Dorsolateral prefrontal cortex (tissue), 120 donors: ENCODE measurements at regions of chr17 and their contacts with region 1.

Region 1: DNA sequence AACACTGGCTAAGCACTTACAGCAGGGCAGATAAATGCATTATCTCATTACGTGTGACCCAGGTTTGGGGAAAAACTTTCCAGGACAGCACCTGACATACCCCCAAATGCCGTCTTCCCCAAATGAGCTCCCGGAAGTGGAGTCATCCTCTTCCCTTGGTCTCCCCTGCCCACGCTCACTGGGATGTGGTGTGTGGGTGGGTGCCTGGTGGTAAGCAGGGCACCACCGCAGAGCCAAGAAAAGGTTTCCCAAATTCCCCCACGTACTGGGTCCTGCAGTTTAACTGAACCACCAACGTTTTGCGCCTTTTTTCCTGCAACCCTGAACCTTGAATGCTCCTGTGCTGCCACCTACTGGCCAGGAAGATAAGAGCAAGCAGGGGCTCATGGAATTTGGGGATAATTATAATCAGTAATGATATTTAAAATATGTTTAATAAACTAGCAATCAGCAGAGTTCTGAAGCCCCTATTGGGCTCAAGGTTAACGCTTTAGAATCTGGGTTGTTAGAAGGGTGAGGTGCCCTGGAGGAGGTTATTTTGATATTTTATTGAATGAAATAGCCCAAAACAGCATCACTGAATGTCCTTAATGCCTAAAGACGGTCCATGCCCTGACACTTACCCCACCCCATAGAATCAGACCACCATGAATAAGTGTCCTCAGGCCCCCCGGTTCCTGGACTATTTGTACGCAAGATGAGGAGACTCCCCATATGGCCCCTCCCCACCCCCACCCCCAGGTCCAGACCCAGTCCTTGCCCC is 8.0 kb downstream of the SPPL2C start:
- DNase-seq: peak; percentile 57 to 84 (median 67)
- H3K4me3 ChIP-seq: peak overlapping the region in 4 of 59 donors; percentile 2 to 15 (median 10)
- H3K27ac ChIP-seq: peak overlapping the region in 4 of 59 donors; percentile 19 to 55 (median 33)
- H3K27me3 ChIP-seq: no peaks in the 10 kb centered on the region
- CTCF ChIP-seq: peak; percentile 77 to 97 (median 90)

Region 2: DNA sequence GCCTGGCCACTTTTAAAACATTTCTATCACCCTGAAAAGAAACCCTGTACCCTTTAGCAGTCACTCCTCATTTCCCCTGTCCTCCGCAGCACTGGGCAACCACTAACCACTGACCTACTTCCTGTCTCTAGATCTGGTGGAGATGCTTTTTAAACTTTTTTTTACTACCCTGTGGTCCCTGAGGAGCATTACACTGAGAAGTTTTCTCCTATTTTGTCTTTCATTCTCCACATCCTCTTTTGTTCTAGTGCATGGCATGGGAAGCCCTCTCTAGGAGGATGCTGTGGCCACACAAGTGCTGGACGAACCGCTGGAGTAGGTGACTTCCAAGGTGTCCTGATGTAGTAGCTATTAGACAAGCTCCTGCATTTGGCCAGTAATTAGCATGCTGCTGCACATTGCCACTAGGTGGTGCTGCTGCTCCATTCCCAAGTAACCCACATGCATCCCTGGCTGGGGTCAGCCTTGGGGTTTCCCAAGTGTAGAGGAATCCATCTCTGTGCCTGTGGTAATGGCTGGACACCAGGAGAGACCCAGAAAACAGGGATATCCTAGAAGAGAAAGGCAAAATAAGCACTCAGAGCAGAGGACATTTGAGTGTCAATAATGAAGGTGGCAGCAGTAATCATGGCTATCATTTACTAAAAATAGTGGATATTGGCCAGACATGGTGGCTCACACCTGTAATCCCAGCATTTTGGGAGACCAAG is 212.4 kb before region 1 on chr17:
- intact Hi-C with region 1: loop called in 1 of 2 experiments (anchors 5 kb)
- DNase-seq: peak; percentile 73 to 86 (median 80)
- H3K4me3 ChIP-seq: no peak overlapping the region
- H3K27ac ChIP-seq: peak overlapping the region in 3 of 59 donors; percentile 5 to 44 (median 35)
- H3K27me3 ChIP-seq: no peaks in the 10 kb centered on the region
- CTCF ChIP-seq: peak; percentile 85 to 98 (median 95)

Region 3: DNA sequence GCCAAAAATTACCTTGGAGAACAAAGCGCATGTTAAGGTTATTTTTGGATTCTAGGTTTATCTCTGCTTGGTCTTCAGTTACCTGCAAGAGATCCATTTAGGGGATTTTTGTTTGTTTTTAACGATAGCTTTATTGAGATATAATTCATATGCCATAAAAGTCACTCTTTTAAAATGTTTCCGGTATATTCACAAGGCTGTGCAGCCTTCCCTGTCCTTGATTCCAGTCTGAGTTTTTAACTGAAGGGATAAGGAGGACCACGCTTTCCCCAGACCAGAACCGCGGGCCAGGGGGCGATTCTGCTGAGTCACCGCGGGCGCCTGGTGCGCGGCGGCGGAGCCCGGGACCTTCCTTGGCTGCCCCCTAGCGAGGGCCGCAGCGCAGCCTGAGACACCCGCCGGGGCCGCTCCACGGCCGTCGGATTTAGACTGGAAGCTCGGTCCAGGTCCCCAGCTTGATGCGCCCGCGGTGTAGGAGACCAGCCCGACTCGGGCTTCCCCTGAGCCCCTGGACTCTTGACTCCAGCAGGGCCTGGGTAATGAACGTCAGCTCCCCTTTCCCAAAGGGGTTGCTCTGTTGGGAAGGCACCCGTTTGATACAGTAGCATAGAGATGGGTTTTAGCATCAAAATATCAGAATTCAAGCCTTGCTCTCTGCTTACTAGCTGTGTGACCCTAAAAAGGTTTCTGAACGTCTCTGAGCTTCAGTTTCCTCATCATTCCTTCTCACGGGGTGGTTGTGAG is 96.3 kb after region 1 on chr17:
- intact Hi-C with region 1: loop called in 1 of 2 experiments (anchors 5 kb)
- DNase-seq: peak; percentile 66 to 84 (median 76)
- H3K4me3 ChIP-seq: peak overlapping the region in 55 of 59 donors; percentile 0 to 55 (median 35)
- H3K27ac ChIP-seq: peak overlapping the region; percentile 44 to 99 (median 96)
- H3K27me3 ChIP-seq: no peaks in the 10 kb centered on the region
- CTCF ChIP-seq: peak; percentile 28 to 95 (median 86)